Ovary (tissue), 10 donors: ENCODE measurements at regions of chr7 and their contacts with region 1.

Region 1: DNA sequence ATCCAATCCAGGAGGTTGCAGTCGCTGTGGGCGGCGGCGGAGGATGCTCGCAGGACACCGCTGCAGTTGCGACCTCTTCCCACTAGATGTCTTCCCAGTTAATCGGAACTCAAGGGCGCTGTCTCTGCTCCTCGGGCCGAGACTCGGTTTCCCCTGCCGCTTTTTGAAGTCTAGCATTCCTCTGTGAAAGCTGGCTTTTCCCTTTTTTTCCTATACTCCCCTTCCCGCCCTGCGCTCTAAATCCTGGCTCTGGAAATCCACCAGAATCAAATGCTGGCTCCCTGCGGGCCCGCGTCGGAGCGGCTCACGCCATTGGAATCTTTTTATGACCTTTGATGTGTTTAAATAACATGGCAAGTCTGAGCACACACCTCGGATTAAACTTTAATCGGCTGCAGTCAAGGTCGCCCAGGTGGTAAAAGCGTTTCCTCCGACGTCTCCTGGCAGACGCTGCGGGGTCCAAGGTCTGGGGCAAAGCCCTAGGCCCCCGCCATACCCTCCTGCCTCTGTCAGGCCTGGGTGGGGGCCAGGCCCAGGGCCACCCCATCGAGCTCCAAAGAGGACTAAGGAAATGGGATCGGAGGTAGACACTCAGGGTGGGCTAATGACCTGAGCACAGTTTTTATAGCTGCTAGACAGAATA is 10.7 kb upstream of the HOXA13 start:
- DNase-seq: peak in 2 of 5 donors; percentile 38 to 60
- H3K4me3 ChIP-seq: peak overlapping the region; percentile 17
- H3K27ac ChIP-seq: no peak overlapping the region
- H3K4me1 ChIP-seq: peaks cover under 1% of the 10 kb centered on the region
- H3K27me3 ChIP-seq: no peaks in the 10 kb centered on the region
- CTCF ChIP-seq: peak; percentile 18 to 51 (median 20)
- EP300 ChIP-seq: no peak
- POLR2A ChIP-seq: no peak

Region 2: GRCh38 chr7:27172823-27173510 is 37.6 kb before region 1 on chr7:
- intact Hi-C with region 1: no loop called
- DNase-seq: peak; percentile 48 to 77 (median 67)
- H3K4me3 ChIP-seq: peak overlapping the region; percentile 53
- H3K27ac ChIP-seq: no peak overlapping the region
- H3K4me1 ChIP-seq: peaks cover 14% of the 10 kb centered on the region
- H3K27me3 ChIP-seq: peaks cover 21% of the 10 kb centered on the region
- CTCF ChIP-seq: no peak
- EP300 ChIP-seq: no peak
- POLR2A ChIP-seq: no peak

Region 3: GRCh38 chr7:27576360-27576944 is 365.9 kb after region 1 on chr7:
- intact Hi-C with region 1: loop called in 2 of 4 experiments (anchors 5 to 10 kb)
- DNase-seq: no peak
- H3K4me3 ChIP-seq: no peak overlapping the region
- H3K27ac ChIP-seq: no peak overlapping the region
- H3K4me1 ChIP-seq: no peaks in the 10 kb centered on the region
- H3K27me3 ChIP-seq: no peaks in the 10 kb centered on the region
- CTCF ChIP-seq: peak in 2 of 3 donors; percentile 17 to 36
- EP300 ChIP-seq: no peak
- POLR2A ChIP-seq: no peak

Region 4: GRCh38 chr7:27586825-27587224 is 376.3 kb after region 1 on chr7:
- intact Hi-C with region 1: no loop called
- DNase-seq: no peak
- H3K4me3 ChIP-seq: no peak overlapping the region
- H3K27ac ChIP-seq: no peak overlapping the region
- H3K4me1 ChIP-seq: peaks cover 3% of the 10 kb centered on the region
- H3K27me3 ChIP-seq: no peaks in the 10 kb centered on the region
- CTCF ChIP-seq: no peak
- EP300 ChIP-seq: no peak
- POLR2A ChIP-seq: no peak

Region 5: DNA sequence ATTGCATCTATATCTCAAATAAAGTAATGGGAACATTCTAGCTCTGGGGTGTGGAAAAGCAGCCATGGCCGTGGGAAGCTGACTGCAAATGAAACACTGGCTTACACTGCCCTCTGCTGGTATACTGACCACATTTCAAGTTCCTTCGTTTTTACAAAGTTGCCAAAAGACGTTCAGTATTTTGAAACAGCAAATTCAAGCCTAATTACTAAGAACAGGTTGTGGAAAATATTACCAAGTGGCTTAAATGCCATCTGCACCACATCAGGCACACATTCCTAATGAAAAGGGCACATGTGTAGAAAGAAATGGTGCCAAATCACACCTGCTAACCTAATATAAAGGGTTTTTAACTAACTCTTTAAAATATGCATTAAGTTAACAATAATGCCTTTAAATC is 886.2 kb after region 1 on chr7:
- intact Hi-C with region 1: loop called in 1 of 4 experiments (anchors 5 kb)
- DNase-seq: peak; percentile 42 to 73 (median 49)
- H3K4me3 ChIP-seq: no peak overlapping the region
- H3K27ac ChIP-seq: no peak overlapping the region
- H3K4me1 ChIP-seq: no peaks in the 10 kb centered on the region
- H3K27me3 ChIP-seq: no peaks in the 10 kb centered on the region
- CTCF ChIP-seq: peak in 2 of 3 donors; percentile 84 to 86
- EP300 ChIP-seq: no peak
- POLR2A ChIP-seq: no peak